ENCODE measurements at regions of chr7 and their contacts with region 1.

Region 1: DNA sequence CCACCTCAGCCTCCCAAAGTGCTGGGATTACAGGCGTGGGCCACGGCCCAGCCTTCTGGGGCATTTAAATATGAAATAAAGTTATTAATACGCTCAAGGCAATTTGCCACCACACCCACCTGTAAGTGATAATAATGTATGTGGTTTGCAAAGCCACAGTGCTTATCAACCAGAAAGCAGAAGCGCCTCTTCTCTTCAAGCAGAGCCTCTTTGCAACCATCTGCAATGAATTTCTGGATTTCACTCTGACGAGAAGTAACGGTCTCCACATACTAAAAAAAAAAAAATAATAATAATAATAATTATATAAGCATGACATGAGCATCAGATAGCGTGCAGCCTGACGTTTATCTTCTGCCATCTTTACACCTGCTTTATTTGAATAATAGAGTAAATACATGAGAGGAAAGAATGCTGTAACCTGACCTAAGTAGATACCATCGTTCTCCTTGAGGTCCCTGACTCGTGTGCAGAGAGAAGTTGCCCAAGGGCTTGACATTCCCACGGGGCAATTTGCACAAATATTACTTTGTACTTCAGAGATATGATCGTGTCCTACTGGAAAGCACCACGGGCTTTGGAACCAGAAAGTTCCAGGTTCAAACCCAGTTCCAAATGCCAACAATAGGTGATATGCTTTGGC is 34.0 kb downstream of the BRI3 start:
- DNase-seq: no peak
- ATAC-seq: no peak
- H3K4me3 ChIP-seq: no peak overlapping the region
- H3K27ac ChIP-seq: no peak overlapping the region
- H3K4me1 ChIP-seq: no peaks in the 10 kb centered on the region
- H3K27me3 ChIP-seq: no peaks in the 10 kb centered on the region
- CTCF ChIP-seq: no peak

Region 2: DNA sequence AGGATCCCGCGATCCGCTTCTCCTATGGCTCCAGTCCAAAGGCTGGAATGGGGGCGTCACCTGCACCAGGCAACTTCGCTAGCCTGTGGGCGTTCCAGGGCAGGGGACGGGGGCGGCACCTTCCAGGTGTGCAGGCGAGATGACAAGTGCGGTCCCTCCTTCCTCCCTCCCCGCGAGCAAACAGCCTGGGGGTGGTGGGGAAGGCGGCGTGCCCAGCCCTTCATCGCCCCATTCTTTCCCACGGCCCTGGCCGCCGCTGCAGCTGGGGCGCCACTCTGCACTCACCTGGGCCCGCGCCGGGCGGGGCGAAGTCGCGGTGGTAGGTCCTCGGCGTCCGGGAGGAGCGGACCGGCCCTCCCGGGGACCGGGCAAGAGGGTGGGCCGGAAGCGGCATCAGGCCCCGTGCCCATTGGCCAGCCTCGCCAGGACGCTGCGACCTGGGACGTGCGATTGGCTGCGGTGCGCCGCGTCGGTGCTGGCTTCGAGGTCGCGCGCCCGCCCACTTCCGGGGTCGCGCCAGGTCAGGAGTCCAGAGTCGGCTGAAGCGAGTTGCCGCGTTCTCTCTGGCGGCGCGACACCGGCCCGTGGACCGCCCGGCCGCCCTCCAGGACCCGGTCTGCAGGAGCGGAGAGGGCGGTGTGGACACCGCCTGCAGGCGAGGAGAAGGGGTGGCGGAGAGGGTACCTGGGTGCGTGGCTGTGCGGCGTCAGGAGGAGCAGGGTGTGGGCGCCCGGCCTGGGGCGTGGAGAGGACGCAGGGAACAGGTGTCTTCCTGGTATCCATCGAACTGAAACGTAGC is 63.4 kb before region 1 on chr7 and contains the start of gene TECPR1:
- CTCF ChIA-PET with region 1: no interaction called
- POLR2A ChIA-PET with region 1: no interaction called
- in situ Hi-C with region 1: no loop called
- intact Hi-C with region 1: no loop called
- DNase-seq: peak; percentile 52
- ATAC-seq: peak; percentile 100
- H3K4me3 ChIP-seq: peak within 1 kb of the TSS; percentile 76 to 93
- H3K27ac ChIP-seq: peak within 1 kb of the TSS; percentile 73
- H3K4me1 ChIP-seq: peaks cover 9% of the 10 kb centered on the region
- H3K27me3 ChIP-seq: no peaks in the 10 kb centered on the region
- CTCF ChIP-seq: no peak
- total RNA-seq, gene TECPR1: 21.0 TPM

Region 3: DNA sequence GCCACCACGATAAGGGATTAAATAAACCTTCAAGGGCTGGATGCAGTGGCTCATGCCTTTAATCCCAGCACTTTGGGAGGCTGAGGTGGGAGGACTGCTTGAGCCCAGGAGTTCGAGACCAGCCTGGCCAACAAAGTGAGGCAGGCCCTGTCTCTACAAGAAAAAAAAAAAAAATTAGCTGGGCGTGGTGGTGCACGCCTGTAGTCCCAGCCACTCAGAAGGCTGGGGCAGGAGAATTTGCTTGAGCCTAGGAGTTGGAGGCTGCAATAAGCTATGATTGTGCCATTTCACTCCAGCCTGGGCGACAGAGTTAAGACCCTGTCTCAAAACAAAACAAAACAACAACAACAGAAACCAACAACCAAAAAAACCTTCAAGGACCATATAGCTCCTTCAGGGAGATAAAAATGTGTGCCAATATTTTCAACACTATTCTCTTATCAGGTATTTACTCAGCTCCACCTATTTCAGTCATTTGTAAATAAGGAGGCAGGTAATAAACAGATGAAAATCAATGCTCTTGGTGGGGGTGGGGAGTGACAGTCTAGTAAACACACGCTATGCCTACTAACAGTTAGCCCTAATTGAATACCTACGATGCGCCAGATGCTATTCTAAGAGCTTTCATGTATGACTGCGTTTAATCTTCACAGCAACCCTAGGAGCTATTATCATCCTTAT is 72.2 kb after region 1 on chr7:
- CTCF ChIA-PET with region 1: no interaction called
- POLR2A ChIA-PET with region 1: interaction called, 23 read pairs
- in situ Hi-C with region 1: no loop called
- intact Hi-C with region 1: no loop called
- DNase-seq: no peak
- ATAC-seq: no peak
- H3K4me3 ChIP-seq: no peak overlapping the region
- H3K27ac ChIP-seq: no peak overlapping the region
- H3K4me1 ChIP-seq: peaks cover 29% of the 10 kb centered on the region
- H3K27me3 ChIP-seq: no peaks in the 10 kb centered on the region
- CTCF ChIP-seq: no peak

Region 4: GRCh38 chr7:98681951-98682350 is 366.5 kb after region 1 on chr7:
- CTCF ChIA-PET with region 1: no interaction called
- POLR2A ChIA-PET with region 1: interaction called, 16 read pairs
- in situ Hi-C with region 1: no loop called
- intact Hi-C with region 1: no loop called
- DNase-seq: no peak
- ATAC-seq: no peak
- H3K4me3 ChIP-seq: no peak overlapping the region
- H3K27ac ChIP-seq: no peak overlapping the region
- H3K4me1 ChIP-seq: no peaks in the 10 kb centered on the region
- H3K27me3 ChIP-seq: no peaks in the 10 kb centered on the region
- CTCF ChIP-seq: no peak

Measured in Panc1 (cell line).